ENCODE measurements at regions of chr11 and their contacts with region 1.

Region 1: DNA sequence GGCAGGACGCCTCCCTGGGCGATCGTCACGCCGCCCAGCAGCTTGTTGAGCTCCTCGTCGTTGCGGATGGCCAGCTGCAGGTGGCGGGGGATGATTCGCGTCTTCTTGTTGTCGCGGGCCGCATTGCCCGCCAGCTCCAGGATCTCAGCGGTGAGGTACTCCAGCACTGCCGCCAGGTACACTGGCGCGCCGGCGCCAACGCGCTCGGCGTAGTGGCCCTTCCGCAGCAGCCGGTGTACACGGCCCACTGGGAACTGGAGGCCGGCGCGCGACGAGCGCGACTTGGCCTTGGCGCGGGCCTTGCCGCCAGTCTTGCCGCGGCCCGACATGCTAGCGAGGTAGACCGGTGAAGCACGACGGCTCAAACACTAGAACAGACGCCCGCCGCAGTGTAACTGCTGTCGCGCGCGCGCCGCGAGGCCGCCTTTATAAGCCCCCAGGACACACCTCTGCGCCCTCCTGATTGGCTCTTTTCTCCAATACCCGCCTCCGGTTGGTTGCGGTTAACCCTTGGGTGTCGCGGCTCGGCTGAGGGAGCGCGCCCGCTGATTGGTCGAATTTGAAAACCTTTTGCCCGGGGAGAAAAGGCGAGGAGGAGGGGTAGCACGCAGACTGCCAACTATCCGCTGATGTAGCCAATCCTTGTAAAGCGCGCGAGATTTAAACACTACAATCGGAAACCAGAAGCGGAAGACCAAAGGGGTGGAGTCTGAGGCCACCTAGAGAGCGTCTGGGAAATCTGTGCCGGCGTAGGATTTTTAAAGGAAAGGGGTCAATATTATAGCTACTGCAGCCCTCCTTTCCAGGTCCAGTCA is 6.4 kb downstream of the DPAGT1 start:
- DNase-seq: peak; percentile 100
- H3K4me3 ChIP-seq: peak overlapping the region; percentile 71
- H3K27ac ChIP-seq: peak overlapping the region; percentile 90
- H3K4me1 ChIP-seq: peaks cover 4% of the 10 kb centered on the region
- H3K27me3 ChIP-seq: no peaks in the 10 kb centered on the region
- CTCF ChIP-seq: no peak

Region 2: GRCh38 chr11:118883368-118884071 is 211.8 kb before region 1 on chr11 and contains the start of gene CXCR5:
- intact Hi-C with region 1: no loop called
- DNase-seq: no peak
- H3K4me3 ChIP-seq: no peak within 1 kb of the TSS
- H3K27ac ChIP-seq: no peak within 1 kb of the TSS
- H3K4me1 ChIP-seq: no peaks in the 10 kb centered on the region
- H3K27me3 ChIP-seq: no peaks in the 10 kb centered on the region
- CTCF ChIP-seq: no peak
- total RNA-seq, gene CXCR5: 0.05 to 0.19 TPM

Region 3: GRCh38 chr11:118928108-118928870 is 167.0 kb before region 1 on chr11:
- intact Hi-C with region 1: loop called (anchors 5 kb)
- DNase-seq: peak; percentile 97
- H3K4me3 ChIP-seq: peak overlapping the region; percentile 76
- H3K27ac ChIP-seq: peak overlapping the region; percentile 100
- H3K4me1 ChIP-seq: peaks cover 9% of the 10 kb centered on the region
- H3K27me3 ChIP-seq: no peaks in the 10 kb centered on the region
- CTCF ChIP-seq: peak; percentile 84